CD4-positive, alpha-beta T cell (primary cell): ENCODE measurements at regions of chr5 and their contacts with region 1.

Region 1: DNA sequence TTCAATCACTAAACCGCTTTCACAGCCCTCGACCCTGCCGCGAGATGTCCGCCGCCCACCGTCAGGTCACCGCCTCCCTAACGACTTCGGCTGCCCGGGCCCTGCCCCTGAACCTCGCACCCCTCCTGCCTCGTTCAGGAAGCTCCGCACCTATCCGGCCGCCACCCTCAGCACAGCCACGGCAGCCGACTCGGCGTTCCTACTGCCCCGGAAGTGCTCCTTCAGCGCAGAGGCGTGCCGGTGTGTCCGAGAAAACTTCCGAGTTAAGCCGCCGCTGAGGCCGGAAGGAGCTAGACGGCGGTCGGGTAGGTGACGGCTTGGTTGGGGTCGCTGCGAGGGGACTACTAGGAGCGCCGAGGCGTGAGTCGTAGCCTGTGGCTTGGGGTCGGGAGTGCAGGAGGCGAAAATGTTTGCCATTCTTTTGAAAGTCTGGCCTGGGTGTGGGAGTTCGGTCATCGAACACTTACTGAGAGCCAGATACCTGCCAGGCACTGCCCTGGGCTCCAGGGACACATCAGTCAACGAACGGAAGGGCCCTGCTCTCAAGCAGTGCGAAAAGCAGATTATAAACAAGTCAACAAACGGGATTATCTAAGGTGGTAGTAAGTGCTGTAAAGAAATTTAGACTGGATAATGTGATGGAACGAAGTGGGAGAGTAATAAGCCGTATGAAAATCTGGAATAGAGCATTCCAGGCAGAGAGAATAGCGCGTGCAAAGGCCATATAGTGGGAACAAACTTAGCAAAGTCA is at the starts of genes FAM114A2 and MFAP3:
- DNase-seq: peak; percentile 80 to 94 (median 85)
- ATAC-seq: peak; percentile 96
- H3K4me3 ChIP-seq: peak within 1 kb of the TSS; percentile 92
- H3K4me3 Mint-ChIP-seq: peak within 1 kb of the TSS; percentile 99
- H3K27ac ChIP-seq: peak within 1 kb of the TSS; percentile 69 to 91
- H3K27ac Mint-ChIP-seq: peak within 1 kb of the TSS; percentile 98
- H3K4me1 ChIP-seq: peaks cover 13% of the 10 kb centered on the region
- H3K4me1 Mint-ChIP-seq: peaks cover 72% of the 10 kb centered on the region
- H3K27me3 ChIP-seq: no peaks in the 10 kb centered on the region
- H3K27me3 Mint-ChIP-seq: no peaks in the 10 kb centered on the region
- CTCF ChIP-seq: no peak
- total RNA-seq, gene FAM114A2: 21.9 to 23.3 TPM
- total RNA-seq, gene MFAP3: 14.9 to 17.7 TPM

Region 2: GRCh38 chr5:153777681-153778581 is 261.0 kb before region 1 on chr5:
- CTCF ChIA-PET with region 1: no interaction called
- POLR2A ChIA-PET with region 1: no interaction called
- intact Hi-C with region 1: no loop called
- DNase-seq: no peak
- ATAC-seq: no peak
- H3K4me3 ChIP-seq: no peak overlapping the region
- H3K4me3 Mint-ChIP-seq: no peak overlapping the region
- H3K27ac ChIP-seq: no peak overlapping the region
- H3K27ac Mint-ChIP-seq: no peak overlapping the region
- H3K4me1 ChIP-seq: no peaks in the 10 kb centered on the region
- H3K4me1 Mint-ChIP-seq: no peaks in the 10 kb centered on the region
- H3K27me3 ChIP-seq: peaks cover 0 to 3% of the 10 kb centered on the region in 2 experiments
- H3K27me3 Mint-ChIP-seq: peaks cover 16% of the 10 kb centered on the region
- CTCF ChIP-seq: no peak

Region 3: DNA sequence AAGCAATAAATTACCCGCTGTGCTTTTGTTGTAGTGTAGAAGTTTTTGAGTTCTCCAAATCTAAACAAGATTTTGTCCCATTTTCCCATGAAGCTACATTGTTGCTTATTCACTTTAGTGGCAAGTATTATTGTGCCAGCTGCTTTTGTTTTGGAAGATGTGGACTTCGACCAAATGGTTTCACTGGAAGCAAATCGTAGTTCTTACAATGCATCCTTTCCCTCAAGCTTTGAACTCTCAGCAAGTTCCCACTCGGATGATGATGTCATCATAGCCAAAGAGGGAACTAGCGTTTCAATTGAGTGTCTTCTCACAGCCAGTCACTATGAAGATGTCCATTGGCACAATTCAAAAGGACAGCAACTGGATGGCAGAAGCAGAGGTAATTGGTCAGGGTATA is 10.8 kb after region 1 on chr5:
- CTCF ChIA-PET with region 1: interaction called, 4 read pairs
- POLR2A ChIA-PET with region 1: interaction called, 14 read pairs
- intact Hi-C with region 1: no loop called
- DNase-seq: no peak
- ATAC-seq: no peak
- H3K4me3 ChIP-seq: no peak overlapping the region
- H3K4me3 Mint-ChIP-seq: no peak overlapping the region
- H3K27ac ChIP-seq: no peak overlapping the region
- H3K27ac Mint-ChIP-seq: no peak overlapping the region
- H3K4me1 ChIP-seq: peaks cover 5% of the 10 kb centered on the region
- H3K4me1 Mint-ChIP-seq: peaks cover 57% of the 10 kb centered on the region
- H3K27me3 ChIP-seq: no peaks in the 10 kb centered on the region
- H3K27me3 Mint-ChIP-seq: no peaks in the 10 kb centered on the region
- CTCF ChIP-seq: no peak

Region 4: GRCh38 chr5:154087257-154087656 is 48.4 kb after region 1 on chr5:
- CTCF ChIA-PET with region 1: no interaction called
- POLR2A ChIA-PET with region 1: no interaction called
- intact Hi-C with region 1: no loop called
- DNase-seq: no peak
- ATAC-seq: no peak
- H3K4me3 ChIP-seq: no peak overlapping the region
- H3K4me3 Mint-ChIP-seq: no peak overlapping the region
- H3K27ac ChIP-seq: no peak overlapping the region
- H3K27ac Mint-ChIP-seq: no peak overlapping the region
- H3K4me1 ChIP-seq: no peaks in the 10 kb centered on the region
- H3K4me1 Mint-ChIP-seq: peaks cover 4% of the 10 kb centered on the region
- H3K27me3 ChIP-seq: no peaks in the 10 kb centered on the region
- H3K27me3 Mint-ChIP-seq: peaks cover 22% of the 10 kb centered on the region
- CTCF ChIP-seq: no peak

Region 5: GRCh38 chr5:154445422-154446182 is 406.7 kb after region 1 on chr5 and contains the start of gene SAP30L:
- CTCF ChIA-PET with region 1: no interaction called
- POLR2A ChIA-PET with region 1: interaction called, 3 read pairs
- intact Hi-C with region 1: loop called in 1 of 2 experiments (anchors 2 kb)
- DNase-seq: peak; percentile 90 to 97 (median 94)
- ATAC-seq: peak; percentile 94
- H3K4me3 ChIP-seq: peak within 1 kb of the TSS; percentile 79
- H3K4me3 Mint-ChIP-seq: peak within 1 kb of the TSS; percentile 97
- H3K27ac ChIP-seq: peak within 1 kb of the TSS; percentile 42 to 73
- H3K27ac Mint-ChIP-seq: peak within 1 kb of the TSS; percentile 89
- H3K4me1 ChIP-seq: peaks cover 38% of the 10 kb centered on the region
- H3K4me1 Mint-ChIP-seq: peaks cover 69% of the 10 kb centered on the region
- H3K27me3 ChIP-seq: no peaks in the 10 kb centered on the region
- H3K27me3 Mint-ChIP-seq: no peaks in the 10 kb centered on the region
- CTCF ChIP-seq: no peak
- total RNA-seq, gene SAP30L: 32.2 to 33.6 TPM

Region 6: DNA sequence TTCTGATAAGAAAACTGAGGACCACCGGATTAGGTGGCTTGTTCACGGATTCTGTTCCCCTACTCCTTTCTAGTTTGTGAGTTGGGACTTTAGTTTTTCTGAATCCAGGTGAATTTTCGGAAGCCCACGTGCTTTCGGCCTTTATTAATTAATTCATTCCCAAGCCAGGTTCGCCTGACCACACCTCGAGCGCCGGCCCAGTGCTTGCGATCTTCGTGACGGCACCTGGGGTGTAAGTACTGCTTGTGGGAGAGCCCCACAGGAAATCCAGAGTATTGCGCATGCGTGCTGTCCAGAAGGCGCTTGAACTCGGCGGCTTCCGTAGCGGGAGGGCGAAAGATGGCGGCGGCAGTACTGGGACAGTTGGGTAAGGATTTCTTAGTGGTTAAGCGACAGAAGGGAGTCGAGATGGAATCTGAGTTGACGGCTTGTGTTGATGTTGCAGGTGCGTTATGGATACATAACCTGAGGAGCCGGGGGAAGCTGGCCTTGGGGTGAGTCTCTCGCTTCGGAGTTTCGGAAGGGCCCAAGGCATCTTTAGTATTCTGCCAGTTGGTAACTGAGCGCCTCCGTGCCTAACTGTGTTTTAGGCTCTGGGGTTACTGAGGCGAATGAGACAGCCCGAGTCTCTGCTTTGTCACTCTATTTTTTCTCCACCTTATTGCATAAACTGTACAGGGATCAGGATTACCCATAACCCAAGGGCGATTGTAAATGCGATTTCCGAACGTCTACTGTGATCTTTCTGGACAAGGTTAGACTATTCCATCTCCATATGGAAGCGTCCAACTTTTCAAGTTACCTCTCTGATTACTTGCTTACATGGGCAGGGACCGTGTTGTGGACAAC is 902.1 kb after region 1 on chr5 and contains the start of gene MRPL22:
- CTCF ChIA-PET with region 1: no interaction called
- POLR2A ChIA-PET with region 1: interaction called, 5 read pairs
- intact Hi-C with region 1: loop called in 1 of 2 experiments (anchors 5 kb)
- DNase-seq: peak; percentile 89 to 98 (median 94)
- ATAC-seq: peak; percentile 79
- H3K4me3 ChIP-seq: peak within 1 kb of the TSS; percentile 94
- H3K4me3 Mint-ChIP-seq: peak within 1 kb of the TSS; percentile 99
- H3K27ac ChIP-seq: peak within 1 kb of the TSS; percentile 68 to 75
- H3K27ac Mint-ChIP-seq: peak within 1 kb of the TSS; percentile 97
- H3K4me1 ChIP-seq: peaks cover 44% of the 10 kb centered on the region
- H3K4me1 Mint-ChIP-seq: peaks cover 52% of the 10 kb centered on the region
- H3K27me3 ChIP-seq: no peaks in the 10 kb centered on the region
- H3K27me3 Mint-ChIP-seq: no peaks in the 10 kb centered on the region
- CTCF ChIP-seq: no peak
- total RNA-seq, gene MRPL22: 29.9 to 30.2 TPM